ENCODE measurements at regions of chr7 and their contacts with region 1.

Region 1: GRCh38 chr7:44415047-44415446 is 75.4 kb downstream of the NUDCD3 start:
- DNase-seq: no peak
- H3K4me3 ChIP-seq: no peak overlapping the region
- H3K27ac ChIP-seq: no peak overlapping the region
- H3K27me3 ChIP-seq: no peaks in the 10 kb centered on the region
- CTCF ChIP-seq: no peak

Region 2: GRCh38 chr7:44431091-44431608 is 16.1 kb after region 1 on chr7:
- CTCF ChIA-PET with region 1: no interaction called
- POLR2A ChIA-PET with region 1: interaction called, 13 read pairs
- DNase-seq: no peak
- H3K4me3 ChIP-seq: no peak overlapping the region
- H3K27ac ChIP-seq: no peak overlapping the region
- H3K27me3 ChIP-seq: no peaks in the 10 kb centered on the region
- CTCF ChIP-seq: peak; percentile 11; the same call in 1 of the 2 replicates